CD14-positive monocyte (primary cell): ENCODE measurements at regions of chr18 and their contacts with region 1.

Region 1: GRCh38 chr18:24219561-24220317 is 80.9 kb downstream of the CABYR start:
- DNase-seq: no peak
- H3K4me3 ChIP-seq: no peak overlapping the region
- H3K4me3 Mint-ChIP-seq: no peak overlapping the region
- H3K27ac ChIP-seq: no peak overlapping the region
- H3K27ac Mint-ChIP-seq: peak overlapping the region in 1 of 7 donors; percentile 3
- H3K4me1 ChIP-seq: no peaks in the 10 kb centered on the region
- H3K4me1 Mint-ChIP-seq: no peaks in the 10 kb centered on the region
- H3K27me3 ChIP-seq: no peaks in the 10 kb centered on the region
- H3K27me3 Mint-ChIP-seq: no peaks in the 10 kb centered on the region
- CTCF ChIP-seq: no peak

Region 2: GRCh38 chr18:24262087-24262486 is 42.3 kb after region 1 on chr18:
- intact Hi-C with region 1: loop called in 1 of 2 experiments (anchors 5 kb)
- DNase-seq: no peak
- H3K4me3 ChIP-seq: no peak overlapping the region
- H3K4me3 Mint-ChIP-seq: peak overlapping the region in 1 of 2 donors; percentile 8
- H3K27ac ChIP-seq: no peak overlapping the region
- H3K27ac Mint-ChIP-seq: no peak overlapping the region
- H3K4me1 ChIP-seq: peaks cover 7 to 12% of the 10 kb centered on the region in 2 donors
- H3K4me1 Mint-ChIP-seq: peaks cover 17% of the 10 kb centered on the region
- H3K27me3 ChIP-seq: no peaks in the 10 kb centered on the region
- H3K27me3 Mint-ChIP-seq: no peaks in the 10 kb centered on the region
- CTCF ChIP-seq: no peak